ENCODE measurements at regions of chr7 and their contacts with region 1.

Region 1: GRCh38 chr7:18666107-18666728 is 170.7 kb downstream of the HDAC9 start:
- DNase-seq: peak; percentile 16
- H3K4me3 ChIP-seq: no peak overlapping the region
- CTCF ChIP-seq: peak; percentile 92

Region 2: GRCh38 chr7:18638594-18639452 is 27.4 kb before region 1 on chr7:
- CTCF ChIA-PET with region 1: interaction called, 21 read pairs
- POLR2A ChIA-PET with region 1: no interaction called
- DNase-seq: no peak
- H3K4me3 ChIP-seq: no peak overlapping the region
- CTCF ChIP-seq: no peak

Region 3: GRCh38 chr7:18655912-18656311 is 10.3 kb before region 1 on chr7:
- CTCF ChIA-PET with region 1: interaction called, 36 read pairs
- POLR2A ChIA-PET with region 1: no interaction called
- DNase-seq: no peak
- H3K4me3 ChIP-seq: no peak overlapping the region
- CTCF ChIP-seq: no peak

Region 4: GRCh38 chr7:18693406-18693805 is 27.2 kb after region 1 on chr7:
- CTCF ChIA-PET with region 1: interaction called, 12 read pairs
- POLR2A ChIA-PET with region 1: no interaction called
- DNase-seq: peak; percentile 77
- H3K4me3 ChIP-seq: no peak overlapping the region
- CTCF ChIP-seq: peak; percentile 71